ENCODE measurements at regions of chr6 and their contacts with region 1.

Region 1: DNA sequence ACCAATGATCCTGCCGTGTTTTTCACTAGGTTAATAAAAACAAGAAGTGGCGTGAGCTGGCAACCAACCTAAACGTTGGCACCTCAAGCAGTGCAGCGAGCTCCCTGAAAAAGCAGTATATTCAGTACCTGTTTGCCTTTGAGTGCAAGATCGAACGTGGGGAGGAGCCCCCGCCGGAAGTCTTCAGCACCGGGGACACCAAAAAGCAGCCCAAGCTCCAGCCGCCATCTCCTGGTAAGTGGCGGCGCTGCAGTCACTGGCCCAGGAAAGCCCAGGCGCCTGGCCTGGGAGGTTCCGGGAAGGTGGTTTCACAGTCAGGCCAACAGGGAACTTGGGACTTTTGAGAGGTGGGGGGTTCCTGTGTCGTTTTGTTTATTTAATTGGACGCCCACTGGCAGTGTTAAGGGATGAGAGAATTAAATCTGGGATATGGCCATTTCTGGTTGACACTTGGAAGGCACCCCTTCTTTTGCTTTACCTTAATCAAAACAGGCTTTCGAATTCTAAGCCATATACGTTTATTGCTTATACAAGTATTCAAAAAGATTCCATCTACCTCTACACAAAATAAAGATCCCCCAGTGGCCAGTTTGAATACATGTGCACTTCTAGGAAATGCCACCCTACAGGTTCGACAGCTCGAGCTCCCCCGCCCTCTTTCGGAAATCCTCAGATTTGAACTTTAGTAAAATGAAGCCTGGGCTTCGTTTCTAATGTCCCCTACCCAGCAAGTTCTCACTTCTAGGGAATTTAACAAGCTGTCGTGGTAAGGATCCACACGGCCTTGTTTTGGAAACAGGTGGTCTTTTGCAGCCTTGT is 138.9 kb downstream of the TMEM242 start:
- DNase-seq: peak; percentile 36 to 86 (median 70)
- ATAC-seq: peak; percentile 92
- H3K4me3 ChIP-seq: no peak overlapping the region
- H3K27ac ChIP-seq: no peak overlapping the region
- H3K4me1 ChIP-seq: peaks cover 0 to 11% of the 10 kb centered on the region in 2 donors
- H3K27me3 ChIP-seq: no peaks in the 10 kb centered on the region
- CTCF ChIP-seq: peak; percentile 83 to 84

Region 2: DNA sequence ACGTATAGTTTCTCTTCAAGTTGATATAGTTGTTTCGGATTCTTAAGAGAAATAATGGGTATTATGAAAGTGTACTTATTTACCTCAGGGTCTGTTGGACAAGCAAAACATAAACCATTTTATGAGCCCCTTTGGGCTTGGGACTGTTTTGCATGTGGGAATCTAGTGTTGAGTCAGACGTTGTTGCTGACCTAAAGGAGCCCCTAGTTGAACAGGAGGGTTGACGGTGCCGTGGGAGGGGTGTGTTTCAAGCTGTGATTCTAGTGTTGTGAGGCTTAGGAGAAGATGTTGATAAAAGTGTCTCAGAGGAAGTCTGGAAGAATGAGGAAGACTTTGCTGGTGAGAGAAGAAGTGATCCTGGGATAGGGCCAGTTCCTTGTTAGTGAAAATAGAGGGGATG is 267.2 kb before region 1 on chr6:
- intact Hi-C with region 1: no loop called
- DNase-seq: no peak
- ATAC-seq: no peak
- H3K4me3 ChIP-seq: no peak overlapping the region
- H3K27ac ChIP-seq: no peak overlapping the region
- H3K4me1 ChIP-seq: peaks cover 0 to 13% of the 10 kb centered on the region in 2 donors
- H3K27me3 ChIP-seq: no peaks in the 10 kb centered on the region
- CTCF ChIP-seq: no peak

Region 3: GRCh38 chr6:156976216-156977127 is 207.9 kb before region 1 on chr6:
- intact Hi-C with region 1: no loop called
- DNase-seq: no peak
- ATAC-seq: peak; percentile 20
- H3K4me3 ChIP-seq: peak overlapping the region in 1 of 2 donors; percentile 14
- H3K27ac ChIP-seq: no peak overlapping the region
- H3K4me1 ChIP-seq: peaks cover 9 to 21% of the 10 kb centered on the region in 2 donors
- H3K27me3 ChIP-seq: no peaks in the 10 kb centered on the region
- CTCF ChIP-seq: no peak

Region 4: GRCh38 chr6:157034436-157035230 is 149.8 kb before region 1 on chr6:
- intact Hi-C with region 1: loop called in 1 of 2 experiments (anchors 10 kb)
- DNase-seq: peak in 1 of 4 donors; percentile 47
- ATAC-seq: peak; percentile 74
- H3K4me3 ChIP-seq: no peak overlapping the region
- H3K27ac ChIP-seq: no peak overlapping the region
- H3K4me1 ChIP-seq: peaks cover 0 to 47% of the 10 kb centered on the region in 2 donors
- H3K27me3 ChIP-seq: no peaks in the 10 kb centered on the region
- CTCF ChIP-seq: peak; percentile 33 to 52